ENCODE measurements at regions of chr3 and their contacts with region 1.

Region 1: DNA sequence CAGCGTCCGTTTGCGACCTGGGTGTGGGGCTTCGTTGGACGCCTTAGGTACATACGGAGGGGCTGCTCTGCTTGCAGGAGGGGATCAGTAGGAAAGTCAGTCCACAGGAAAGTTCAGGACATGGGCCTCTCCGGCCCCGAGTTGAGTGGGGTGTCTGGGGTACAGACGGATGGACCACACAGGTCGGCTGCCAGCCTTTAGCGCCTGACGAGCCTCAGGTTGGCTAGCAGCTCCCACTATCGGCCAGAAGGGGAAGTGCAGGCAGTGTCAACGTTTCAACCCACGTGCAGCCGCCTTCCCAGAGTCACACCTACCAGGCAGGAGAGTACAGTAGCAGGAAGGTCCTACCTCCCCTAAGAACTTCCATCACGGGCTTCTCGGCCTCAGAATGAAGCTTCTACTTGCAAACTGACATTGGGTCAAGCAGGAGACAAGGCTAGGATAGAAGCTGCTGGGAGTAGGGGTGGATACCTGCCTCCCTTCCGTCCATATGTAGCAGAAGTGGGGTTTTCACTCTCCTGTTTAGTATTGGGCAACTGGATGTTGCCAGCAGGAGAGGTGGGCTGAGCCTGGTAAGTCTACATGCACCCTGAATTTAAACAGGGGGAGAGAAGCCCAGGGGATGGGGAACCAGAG is 1.8 kb upstream of the SCN5A start:
- DNase-seq: peak; percentile 71
- H3K4me3 ChIP-seq: no peak overlapping the region
- H3K27ac ChIP-seq: no peak overlapping the region
- H3K4me1 ChIP-seq: peaks cover 10% of the 10 kb centered on the region
- H3K27me3 ChIP-seq: no peaks in the 10 kb centered on the region
- CTCF ChIP-seq: peak; percentile 93 to 100
- POLR2A ChIP-seq: no peak

Region 2: DNA sequence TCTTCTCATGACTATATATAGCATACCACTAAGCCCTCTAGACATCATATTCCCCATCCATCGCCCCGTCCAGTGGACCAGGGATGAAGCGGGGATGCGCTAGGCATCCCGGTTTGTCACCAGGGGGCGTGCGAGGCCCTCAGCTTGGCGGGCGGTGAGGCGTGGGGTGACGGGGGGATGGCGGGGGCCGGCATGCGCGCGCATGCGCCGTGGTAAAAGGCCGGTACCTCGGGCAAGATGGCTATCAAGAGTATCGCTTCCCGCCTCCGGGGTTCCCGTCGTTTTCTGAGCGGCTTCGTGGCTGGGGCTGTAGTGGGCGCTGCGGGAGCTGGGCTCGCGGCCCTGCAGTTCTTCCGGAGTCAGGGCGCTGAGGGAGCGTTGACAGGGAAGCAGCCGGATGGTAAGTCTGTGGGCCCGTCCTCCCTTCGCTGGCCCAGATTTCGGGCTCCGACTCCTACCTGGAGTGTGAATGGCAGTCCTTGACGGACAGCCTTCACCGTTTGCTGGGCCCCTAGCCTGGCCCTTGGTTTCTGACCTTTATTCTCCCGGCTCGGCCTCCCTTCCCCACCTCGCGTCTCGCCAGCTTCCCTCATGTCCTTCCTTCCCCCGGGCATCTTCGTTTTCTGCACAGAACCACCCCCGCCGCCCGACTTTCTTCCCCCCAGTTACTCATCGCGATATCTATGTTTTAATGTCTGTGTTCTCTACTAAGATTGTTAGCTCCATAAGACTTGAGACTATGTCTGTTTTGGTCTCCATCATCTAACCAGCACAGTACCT is 155.0 kb before region 1 on chr3 and contains the start of gene EXOG:
- CTCF ChIA-PET with region 1: interaction called, 22 read pairs
- POLR2A ChIA-PET with region 1: no interaction called
- dilution Hi-C with region 1: no loop called
- intact Hi-C with region 1: loop called (anchors 1 kb)
- DNase-seq: peak; percentile 93
- H3K4me3 ChIP-seq: peak within 1 kb of the TSS; percentile 73 to 84 (median 80)
- H3K27ac ChIP-seq: peak within 1 kb of the TSS; percentile 4
- H3K4me1 ChIP-seq: peaks cover 7% of the 10 kb centered on the region
- H3K27me3 ChIP-seq: no peaks in the 10 kb centered on the region
- CTCF ChIP-seq: peak; percentile 84 to 94
- POLR2A ChIP-seq: peak; percentile 77
- total RNA-seq, gene EXOG: 21.8 and 21.9 TPM in 2 replicates

Region 3: DNA sequence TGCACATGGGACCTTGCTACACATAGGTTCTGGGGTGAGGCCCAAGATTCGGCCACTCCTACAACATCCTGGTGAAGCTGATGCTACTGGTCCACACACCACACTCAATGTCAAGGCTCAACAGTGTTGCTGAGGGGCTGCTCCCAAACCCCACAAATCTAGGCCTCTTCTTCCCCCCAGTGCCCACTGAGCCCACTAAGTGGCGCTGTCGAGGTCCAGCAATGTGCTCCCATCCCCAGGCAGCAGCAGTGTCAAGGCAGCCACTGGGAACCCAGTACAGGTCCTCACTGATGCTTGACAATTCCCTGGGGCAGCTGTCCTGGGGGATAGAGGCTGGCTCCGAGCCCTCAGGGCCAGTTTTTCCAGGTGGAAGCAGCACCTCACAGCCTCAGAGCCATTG is 23.3 kb before region 1 on chr3:
- CTCF ChIA-PET with region 1: interaction called, 20 read pairs
- POLR2A ChIA-PET with region 1: no interaction called
- dilution Hi-C with region 1: no loop called
- intact Hi-C with region 1: no loop called
- DNase-seq: peak; percentile 32
- H3K4me3 ChIP-seq: no peak overlapping the region
- H3K27ac ChIP-seq: no peak overlapping the region
- H3K4me1 ChIP-seq: no peaks in the 10 kb centered on the region
- H3K27me3 ChIP-seq: no peaks in the 10 kb centered on the region
- CTCF ChIP-seq: peak; percentile 71 to 73
- POLR2A ChIP-seq: no peak

Region 4: GRCh38 chr3:38669668-38670067 is 18.4 kb after region 1 on chr3:
- CTCF ChIA-PET with region 1: interaction called, 14 read pairs
- POLR2A ChIA-PET with region 1: no interaction called
- dilution Hi-C with region 1: no loop called
- intact Hi-C with region 1: no loop called
- DNase-seq: no peak
- H3K4me3 ChIP-seq: no peak overlapping the region
- H3K27ac ChIP-seq: no peak overlapping the region
- H3K4me1 ChIP-seq: no peaks in the 10 kb centered on the region
- H3K27me3 ChIP-seq: peaks cover 4 to 15% of the 10 kb centered on the region in 2 experiments
- CTCF ChIP-seq: no peak
- POLR2A ChIP-seq: no peak

Region 5: DNA sequence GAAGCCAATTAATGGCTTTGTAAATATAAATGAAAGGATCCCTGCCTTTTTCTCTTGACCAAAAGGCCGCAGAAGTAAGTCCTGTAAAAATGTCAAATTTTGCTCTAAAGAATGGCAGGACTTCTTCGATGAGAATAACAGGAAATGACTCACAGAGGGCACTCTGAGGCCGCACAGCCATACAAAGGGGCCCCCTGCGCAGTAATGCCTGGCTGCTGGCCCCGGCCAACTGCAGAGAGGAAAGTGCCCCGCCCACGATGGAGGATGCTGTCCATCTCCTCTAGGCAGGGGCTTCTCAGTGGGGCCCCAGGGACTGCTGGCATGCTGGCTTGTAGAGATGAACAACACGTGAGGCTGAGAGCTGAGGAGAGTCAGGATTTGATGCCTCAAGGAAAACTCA is 182.8 kb after region 1 on chr3:
- CTCF ChIA-PET with region 1: interaction called, 5 read pairs
- POLR2A ChIA-PET with region 1: interaction called, 3 read pairs
- dilution Hi-C with region 1: no loop called
- intact Hi-C with region 1: loop called (anchors 2 kb)
- DNase-seq: peak; percentile 95
- H3K4me3 ChIP-seq: no peak overlapping the region
- H3K27ac ChIP-seq: peak overlapping the region; percentile 86
- H3K4me1 ChIP-seq: peaks cover 44% of the 10 kb centered on the region
- H3K27me3 ChIP-seq: no peaks in the 10 kb centered on the region
- CTCF ChIP-seq: no peak
- POLR2A ChIP-seq: peak; percentile 33

Region 6: GRCh38 chr3:38940394-38940793 is 289.1 kb after region 1 on chr3:
- CTCF ChIA-PET with region 1: no interaction called
- POLR2A ChIA-PET with region 1: no interaction called
- dilution Hi-C with region 1: no loop called
- intact Hi-C with region 1: no loop called
- DNase-seq: no peak
- H3K4me3 ChIP-seq: no peak overlapping the region
- H3K27ac ChIP-seq: no peak overlapping the region
- H3K4me1 ChIP-seq: no peaks in the 10 kb centered on the region
- H3K27me3 ChIP-seq: peaks cover 2 to 4% of the 10 kb centered on the region in 2 experiments
- CTCF ChIP-seq: no peak
- POLR2A ChIP-seq: no peak

Region 7: DNA sequence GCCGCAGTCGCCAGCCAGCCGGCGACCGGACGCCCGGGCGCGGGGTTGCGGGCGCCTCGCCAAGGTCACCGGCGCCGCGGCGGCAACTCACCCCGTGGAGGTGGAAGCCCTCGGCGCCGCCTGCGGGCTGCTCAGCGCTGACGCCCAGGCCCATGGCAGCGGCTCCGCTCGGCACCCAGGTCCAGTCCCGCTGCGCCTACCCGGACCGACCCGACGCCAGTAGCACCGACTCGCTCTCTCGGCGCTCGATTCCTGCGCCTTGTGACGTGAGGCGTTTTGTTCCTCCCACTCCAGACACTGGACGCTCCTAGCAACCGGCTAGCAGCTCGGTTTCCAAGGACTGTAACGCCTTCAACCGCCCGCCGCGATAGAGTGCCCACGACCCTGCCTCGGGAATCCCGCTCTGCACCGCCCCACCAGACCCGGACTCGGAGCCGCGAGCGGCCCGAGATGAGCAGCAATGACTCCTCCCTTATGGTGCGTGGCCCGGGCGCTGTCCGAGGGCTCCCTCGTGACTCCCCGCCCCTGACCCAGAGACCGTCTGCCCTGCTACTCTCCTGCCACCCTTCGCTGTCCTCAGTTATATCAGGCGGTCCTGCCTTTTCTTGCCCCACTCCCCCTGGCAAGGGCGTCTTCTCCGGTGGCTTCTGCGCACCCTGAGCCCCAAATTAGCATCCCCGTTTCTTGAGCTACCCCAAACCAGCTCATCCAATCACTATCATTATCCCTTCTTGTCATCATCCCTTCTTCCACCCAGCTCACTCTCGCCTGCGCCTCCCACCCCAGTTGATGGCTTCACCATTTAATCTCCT is 456.3 kb after region 1 on chr3 and contains the starts of genes GORASP1 and TTC21A:
- CTCF ChIA-PET with region 1: no interaction called
- POLR2A ChIA-PET with region 1: no interaction called
- dilution Hi-C with region 1: no loop called
- intact Hi-C with region 1: no loop called
- DNase-seq: peak; percentile 86
- H3K4me3 ChIP-seq: peak within 1 kb of the TSS; percentile 69 to 84 (median 78)
- H3K27ac ChIP-seq: peak within 1 kb of the TSS; percentile 75
- H3K4me1 ChIP-seq: peaks cover 18% of the 10 kb centered on the region
- H3K27me3 ChIP-seq: no peaks in the 10 kb centered on the region
- CTCF ChIP-seq: no peak
- POLR2A ChIP-seq: peak; percentile 67
- total RNA-seq, gene GORASP1: 68.0 and 74.7 TPM in 2 replicates
- total RNA-seq, gene TTC21A: 6.3 and 7.8 TPM in 2 replicates

Measured in endothelial cell of umbilical vein (primary cell).